Activated naive CD4-positive, alpha-beta T cell treated with anti-CD3 and anti-CD28 coated beads for 36 hours (primary cell): ENCODE measurements at regions of chr9 and their contacts with region 1.

Region 1: DNA sequence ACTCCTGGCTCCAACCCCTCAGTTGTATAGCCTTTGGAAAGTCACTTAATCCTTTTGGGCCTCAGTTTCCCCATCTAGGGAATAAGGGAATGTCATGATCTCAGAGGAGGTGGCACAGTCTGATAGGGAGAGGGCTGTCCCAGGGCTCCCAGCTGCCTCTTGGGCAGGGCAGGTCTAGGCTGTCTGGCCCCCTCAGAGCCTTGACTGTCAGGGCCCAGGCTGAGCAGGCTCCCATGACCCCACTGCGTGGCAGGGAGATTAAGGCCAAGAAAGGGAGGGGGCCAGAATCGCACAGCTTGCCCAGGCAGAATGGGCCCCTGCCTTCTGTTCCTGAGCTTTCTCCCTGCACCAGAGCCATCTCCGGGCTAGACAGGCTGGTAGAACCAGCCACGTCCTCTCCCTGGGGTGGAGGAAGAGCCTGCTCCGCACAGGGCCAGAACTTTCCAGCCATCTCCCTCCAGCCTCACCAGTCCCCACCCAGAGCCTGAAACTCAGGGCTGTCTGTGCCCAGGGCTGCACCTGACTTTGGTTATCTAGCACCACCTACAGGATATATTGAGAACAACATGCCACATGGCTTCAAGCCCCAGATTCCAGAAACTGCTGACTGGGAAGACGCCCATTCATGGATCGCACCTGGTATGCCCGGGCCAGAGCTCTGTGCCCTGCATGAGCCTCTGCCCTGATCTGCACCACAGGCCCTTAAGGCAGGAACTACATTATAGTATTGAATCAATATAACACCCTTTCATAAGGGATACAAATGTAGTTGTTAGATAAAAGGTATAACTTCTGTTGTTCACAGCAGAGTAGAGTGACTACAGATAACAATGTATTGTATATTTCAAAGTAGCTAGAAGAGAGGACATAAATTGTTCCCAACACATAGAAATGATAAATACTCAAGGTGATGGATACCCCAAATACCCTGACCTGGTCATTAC is 32.0 kb downstream of the NAIF1 start:
- DNase-seq: peak; percentile 78
- H3K4me3 Mint-ChIP-seq: no peak overlapping the region
- H3K27ac Mint-ChIP-seq: peak overlapping the region; percentile 62
- H3K4me1 Mint-ChIP-seq: peaks cover 40% of the 10 kb centered on the region
- H3K27me3 Mint-ChIP-seq: no peaks in the 10 kb centered on the region

Region 2: GRCh38 chr9:127838375-127839078 is 196.6 kb before region 1 on chr9:
- CTCF ChIA-PET with region 1: no interaction called
- intact Hi-C with region 1: no loop called
- DNase-seq: no peak
- H3K4me3 Mint-ChIP-seq: no peak overlapping the region
- H3K27ac Mint-ChIP-seq: no peak overlapping the region
- H3K4me1 Mint-ChIP-seq: peaks cover 2% of the 10 kb centered on the region
- H3K27me3 Mint-ChIP-seq: no peaks in the 10 kb centered on the region

Region 3: GRCh38 chr9:127862075-127863011 is 172.8 kb before region 1 on chr9:
- CTCF ChIA-PET with region 1: no interaction called
- intact Hi-C with region 1: no loop called
- DNase-seq: peak; percentile 59
- H3K4me3 Mint-ChIP-seq: no peak overlapping the region
- H3K27ac Mint-ChIP-seq: peak overlapping the region; percentile 54
- H3K4me1 Mint-ChIP-seq: peaks cover 42% of the 10 kb centered on the region
- H3K27me3 Mint-ChIP-seq: no peaks in the 10 kb centered on the region

Region 4: DNA sequence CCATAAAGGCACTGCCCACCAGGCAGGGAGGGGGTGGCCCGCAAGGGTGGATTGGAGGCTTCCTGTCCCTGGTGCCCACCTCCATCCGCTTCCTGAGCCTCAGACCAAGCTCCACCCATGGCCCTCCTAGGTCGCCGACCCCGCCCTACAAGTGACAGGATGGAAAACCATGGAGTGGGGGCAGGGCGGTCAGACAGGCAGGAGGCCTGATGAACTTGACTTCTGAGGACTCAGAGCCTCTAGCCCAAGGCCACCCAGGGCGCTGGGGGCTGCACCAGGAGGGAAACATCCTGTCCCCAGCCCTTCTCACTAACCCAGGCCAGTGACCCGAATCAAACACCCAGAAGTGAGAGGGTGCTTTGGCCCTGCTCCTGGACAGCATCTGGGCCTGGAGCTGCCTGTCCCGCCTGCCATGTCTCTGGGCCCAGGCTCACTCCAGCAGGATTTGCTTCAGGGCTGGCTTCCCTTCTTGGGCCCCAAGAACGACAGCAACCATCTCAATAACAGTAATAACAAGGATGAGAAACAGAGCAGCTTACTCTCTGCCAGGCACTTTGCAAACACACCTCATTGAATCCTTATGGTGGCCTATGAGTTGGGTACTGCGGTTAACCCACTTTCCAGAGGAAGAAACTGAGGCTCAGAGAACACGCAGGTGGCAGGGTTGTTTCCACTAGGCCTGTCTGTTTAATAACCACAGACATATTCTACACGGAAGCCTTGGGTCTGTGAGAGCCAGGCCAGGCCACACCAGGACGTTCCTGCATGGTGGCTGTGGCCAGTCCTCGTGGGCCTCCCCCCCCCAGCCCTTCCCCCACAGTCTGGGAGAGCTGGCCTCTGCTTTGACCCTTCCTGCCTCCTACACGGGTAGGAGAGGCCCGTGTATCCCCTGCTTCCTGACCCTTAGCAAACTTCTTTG is 131.3 kb before region 1 on chr9:
- CTCF ChIA-PET with region 1: interaction called, 10 read pairs
- intact Hi-C with region 1: no loop called
- DNase-seq: peak; percentile 96
- H3K4me3 Mint-ChIP-seq: peak overlapping the region; percentile 88
- H3K27ac Mint-ChIP-seq: peak overlapping the region; percentile 98
- H3K4me1 Mint-ChIP-seq: peaks cover 55% of the 10 kb centered on the region
- H3K27me3 Mint-ChIP-seq: no peaks in the 10 kb centered on the region

Region 5: DNA sequence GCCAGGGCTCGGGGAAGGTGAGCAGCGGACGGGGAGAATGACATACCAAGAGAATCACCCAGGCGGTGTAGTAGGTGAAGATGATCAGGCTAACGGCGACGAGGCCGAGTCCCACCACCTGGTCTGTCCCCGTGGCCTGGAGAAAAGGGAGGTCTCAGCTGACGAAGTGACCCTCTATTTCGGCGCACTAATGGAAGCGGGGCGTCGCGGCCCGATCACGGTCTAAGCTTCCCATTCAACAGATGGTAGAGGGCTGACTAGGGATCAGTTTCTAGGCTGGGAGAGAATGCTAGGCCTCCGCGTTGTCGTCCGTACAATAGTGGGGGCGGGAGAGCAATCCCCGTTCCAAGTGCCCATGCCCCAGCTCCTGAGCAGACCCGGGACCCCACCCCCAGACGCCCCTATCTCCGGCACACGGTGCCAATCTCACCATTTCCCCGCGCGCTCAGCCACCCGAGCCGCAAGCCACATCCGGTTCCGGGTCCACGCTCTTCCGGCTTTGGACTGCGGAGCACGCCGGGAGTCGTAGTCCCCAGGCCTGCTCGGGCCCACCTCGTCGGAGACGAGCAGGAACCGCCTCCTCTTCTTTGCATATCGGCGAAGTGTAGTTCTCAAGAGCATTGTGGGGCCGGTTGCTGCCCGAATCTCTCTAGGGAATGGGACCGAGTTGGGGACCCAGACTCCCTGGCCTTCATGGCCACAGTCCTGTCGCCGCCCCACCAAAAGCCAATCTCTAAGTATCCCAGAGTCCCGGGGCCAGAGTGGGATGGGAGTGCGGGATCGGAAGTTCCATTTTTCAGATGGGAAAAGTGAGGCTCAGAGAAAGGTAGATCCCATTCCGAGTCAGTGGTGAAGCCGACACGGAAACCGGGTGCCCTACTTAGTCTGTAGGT is 97.5 kb before region 1 on chr9 and contains the start of gene DPM2:
- CTCF ChIA-PET with region 1: interaction called, 212 read pairs
- intact Hi-C with region 1: no loop called
- DNase-seq: peak; percentile 87
- H3K4me3 Mint-ChIP-seq: peak within 1 kb of the TSS; percentile 100
- H3K27ac Mint-ChIP-seq: peak within 1 kb of the TSS; percentile 96
- H3K4me1 Mint-ChIP-seq: peaks cover 43% of the 10 kb centered on the region
- H3K27me3 Mint-ChIP-seq: no peaks in the 10 kb centered on the region
- total RNA-seq, gene DPM2: 41.6 to 43.4 TPM

Region 6: DNA sequence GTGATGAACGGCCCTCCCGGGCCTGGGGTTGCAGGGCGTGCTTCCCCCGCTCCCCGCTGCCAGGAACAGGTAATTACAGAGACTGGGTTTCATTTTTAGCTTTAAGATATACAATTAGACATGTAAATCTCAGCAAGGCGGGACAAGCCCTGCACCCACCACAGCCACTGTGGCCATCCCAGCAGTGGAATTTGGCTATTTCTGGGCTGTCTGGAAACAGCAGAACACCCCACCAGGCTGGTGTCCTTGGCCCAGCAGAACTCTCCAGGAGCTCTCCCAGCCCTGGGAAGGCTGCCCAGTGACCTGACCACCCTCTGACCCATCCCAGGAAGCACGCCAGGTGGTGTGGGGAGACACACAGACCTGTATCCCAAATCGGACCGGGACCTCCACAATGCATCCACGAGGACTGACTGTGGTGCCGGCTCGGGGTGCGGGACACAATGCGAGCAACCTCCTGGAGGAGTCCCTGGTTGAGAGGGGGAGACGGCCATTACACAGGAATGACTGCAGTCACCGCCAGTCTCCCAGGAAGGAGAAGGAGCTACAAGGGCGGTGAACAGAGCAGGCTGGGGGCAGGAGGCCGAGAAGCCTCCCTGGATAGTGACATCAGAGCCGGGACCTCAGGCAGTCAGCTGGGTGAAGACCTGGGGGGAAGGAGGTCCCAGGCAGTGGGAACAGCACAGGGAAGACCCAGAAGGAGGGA is 71.6 kb before region 1 on chr9:
- CTCF ChIA-PET with region 1: interaction called, 111 read pairs
- intact Hi-C with region 1: no loop called
- DNase-seq: peak; percentile 72
- H3K4me3 Mint-ChIP-seq: peak overlapping the region; percentile 84
- H3K27ac Mint-ChIP-seq: peak overlapping the region; percentile 99
- H3K4me1 Mint-ChIP-seq: peaks cover 98% of the 10 kb centered on the region
- H3K27me3 Mint-ChIP-seq: no peaks in the 10 kb centered on the region

Region 7: GRCh38 chr9:128020692-128021091 is 14.4 kb before region 1 on chr9:
- CTCF ChIA-PET with region 1: interaction called, 34 read pairs
- intact Hi-C with region 1: loop called (anchors 1 kb)
- DNase-seq: no peak
- H3K4me3 Mint-ChIP-seq: no peak overlapping the region
- H3K27ac Mint-ChIP-seq: peak overlapping the region; percentile 46
- H3K4me1 Mint-ChIP-seq: peaks cover 55% of the 10 kb centered on the region
- H3K27me3 Mint-ChIP-seq: no peaks in the 10 kb centered on the region

Region 8: GRCh38 chr9:128117613-128118471 is 82.7 kb after region 1 on chr9:
- CTCF ChIA-PET with region 1: interaction called, 14 read pairs
- intact Hi-C with region 1: loop called (anchors 2 kb)
- DNase-seq: peak; percentile 98
- H3K4me3 Mint-ChIP-seq: no peak overlapping the region
- H3K27ac Mint-ChIP-seq: no peak overlapping the region
- H3K4me1 Mint-ChIP-seq: peaks cover 10% of the 10 kb centered on the region
- H3K27me3 Mint-ChIP-seq: no peaks in the 10 kb centered on the region